PC-9 (cell line): ENCODE measurements at regions of chr12 and their contacts with region 1.

Region 1: GRCh38 chr12:86213012-86213411 is 43.2 kb downstream of the MGAT4C start:
- DNase-seq: no peak
- H3K4me3 ChIP-seq: no peak overlapping the region
- H3K27ac ChIP-seq: no peak overlapping the region
- H3K4me1 ChIP-seq: no peaks in the 10 kb centered on the region
- H3K27me3 ChIP-seq: no peaks in the 10 kb centered on the region
- CTCF ChIP-seq: no peak

Region 2: DNA sequence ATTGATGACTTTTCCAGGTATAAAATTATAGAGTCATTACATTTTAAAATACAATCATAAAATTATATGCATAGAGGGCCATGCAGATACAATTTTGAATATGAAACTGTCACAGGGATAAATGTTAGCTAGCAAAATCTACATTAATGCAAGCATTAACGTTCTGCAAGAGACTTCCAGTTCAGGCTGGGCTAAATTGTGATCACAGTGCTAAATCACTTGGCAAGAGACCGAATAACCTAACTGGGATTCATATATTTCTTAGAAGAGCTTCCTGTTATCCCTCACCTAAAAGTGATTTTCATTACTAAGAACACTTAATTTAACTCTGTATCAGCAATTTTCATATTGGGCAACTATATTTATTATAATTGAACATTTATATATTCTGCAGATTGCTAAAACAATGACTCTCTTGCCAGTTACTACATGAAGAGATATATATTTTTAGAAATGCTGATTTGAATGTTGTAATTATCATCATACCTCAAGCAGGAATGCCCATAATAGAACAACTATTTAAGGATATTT is 40.0 kb before region 1 on chr12:
- CTCF ChIA-PET with region 1: no interaction called
- POLR2A ChIA-PET with region 1: no interaction called
- intact Hi-C with region 1: no loop called
- DNase-seq: no peak
- H3K4me3 ChIP-seq: no peak overlapping the region
- H3K27ac ChIP-seq: no peak overlapping the region
- H3K4me1 ChIP-seq: no peaks in the 10 kb centered on the region
- H3K27me3 ChIP-seq: no peaks in the 10 kb centered on the region
- CTCF ChIP-seq: no peak

Region 3: DNA sequence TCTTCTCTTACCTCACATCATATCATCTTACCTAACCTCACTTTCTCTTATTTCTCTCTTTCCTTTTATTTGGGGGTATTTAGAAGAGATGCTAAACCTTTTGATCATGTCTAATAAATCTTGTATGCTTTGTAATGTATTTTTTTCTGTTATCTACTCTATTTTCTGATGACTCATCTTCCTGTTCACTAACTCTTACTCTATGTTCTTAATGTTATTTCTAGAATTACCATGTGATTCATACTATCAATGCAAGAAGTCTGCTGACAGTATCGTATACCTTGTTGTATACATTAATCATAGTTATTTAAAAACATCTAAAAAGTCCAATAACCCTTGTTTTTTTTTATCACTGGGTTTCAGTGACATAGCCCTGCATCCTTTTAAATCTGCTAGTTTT is 19.1 kb before region 1 on chr12:
- CTCF ChIA-PET with region 1: no interaction called
- POLR2A ChIA-PET with region 1: no interaction called
- intact Hi-C with region 1: no loop called
- DNase-seq: no peak
- H3K4me3 ChIP-seq: no peak overlapping the region
- H3K27ac ChIP-seq: no peak overlapping the region
- H3K4me1 ChIP-seq: no peaks in the 10 kb centered on the region
- H3K27me3 ChIP-seq: no peaks in the 10 kb centered on the region
- CTCF ChIP-seq: no peak

Region 4: GRCh38 chr12:86331012-86331411 is 118.0 kb after region 1 on chr12:
- CTCF ChIA-PET with region 1: no interaction called
- POLR2A ChIA-PET with region 1: interaction called, 14 read pairs
- intact Hi-C with region 1: no loop called
- DNase-seq: no peak
- H3K4me3 ChIP-seq: no peak overlapping the region
- H3K27ac ChIP-seq: no peak overlapping the region
- H3K4me1 ChIP-seq: no peaks in the 10 kb centered on the region
- H3K27me3 ChIP-seq: no peaks in the 10 kb centered on the region
- CTCF ChIP-seq: no peak